ENCODE measurements at regions of chr2 and their contacts with region 1.

Region 1: DNA sequence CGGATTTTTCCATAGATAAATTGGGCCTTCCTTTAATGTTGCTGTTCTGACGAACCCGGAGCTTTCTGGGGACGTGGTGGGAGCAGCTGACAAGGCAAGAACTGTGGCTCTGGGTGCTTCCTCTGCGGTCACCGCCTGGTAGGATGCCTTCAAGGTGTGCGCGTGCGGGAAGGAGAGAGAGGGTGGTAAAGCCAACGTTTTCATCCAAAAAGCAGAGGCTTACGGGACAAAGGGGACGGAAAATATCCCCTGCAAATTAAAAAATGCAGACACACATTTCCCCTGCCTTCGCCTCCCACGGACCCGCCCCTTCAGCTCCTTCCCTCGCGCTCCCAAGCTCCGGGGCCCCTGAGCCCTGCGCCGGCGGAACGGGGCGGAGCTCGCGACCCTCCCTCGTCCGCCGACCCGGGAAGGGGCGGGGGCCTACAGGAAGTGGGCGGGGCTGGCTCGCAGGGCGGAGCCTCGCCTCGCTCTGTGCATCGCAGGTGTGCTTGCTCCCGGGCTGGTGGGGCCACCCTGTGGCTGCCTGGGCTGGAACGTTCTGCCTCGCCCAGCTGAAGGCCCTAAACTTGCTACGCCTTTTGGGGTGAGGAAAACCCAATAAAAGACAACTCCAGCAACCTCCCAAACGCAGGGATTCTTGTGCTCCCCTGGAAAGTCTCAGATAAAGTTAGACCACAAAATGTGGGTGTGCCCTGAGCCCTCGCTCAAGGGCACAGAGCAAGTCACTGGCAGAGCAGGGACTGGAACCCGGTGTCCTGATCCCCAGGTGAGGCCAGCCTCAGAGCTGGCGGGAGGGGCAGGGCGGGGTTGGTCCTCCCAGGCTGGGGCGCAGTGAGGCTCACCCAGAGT is 25.4 kb upstream of the SLC66A3 start:
- DNase-seq: peak; percentile 96
- H3K4me3 ChIP-seq: peak overlapping the region in 1 of 2 experiments; percentile 29; a peak in 2 of 4 replicates
- H3K27ac ChIP-seq: peak overlapping the region in 1 of 2 experiments; percentile 3; a peak in 1 of 4 replicates
- H3K4me1 ChIP-seq: peaks cover 0 to 20% of the 10 kb centered on the region in 2 experiments; a peak in 1 of 4 replicates
- H3K27me3 ChIP-seq: no peaks in the 10 kb centered on the region
- CTCF ChIP-seq: no peak
- EP300 ChIP-seq: no peak
- RAD21 ChIP-seq: peak; percentile 68

Region 2: DNA sequence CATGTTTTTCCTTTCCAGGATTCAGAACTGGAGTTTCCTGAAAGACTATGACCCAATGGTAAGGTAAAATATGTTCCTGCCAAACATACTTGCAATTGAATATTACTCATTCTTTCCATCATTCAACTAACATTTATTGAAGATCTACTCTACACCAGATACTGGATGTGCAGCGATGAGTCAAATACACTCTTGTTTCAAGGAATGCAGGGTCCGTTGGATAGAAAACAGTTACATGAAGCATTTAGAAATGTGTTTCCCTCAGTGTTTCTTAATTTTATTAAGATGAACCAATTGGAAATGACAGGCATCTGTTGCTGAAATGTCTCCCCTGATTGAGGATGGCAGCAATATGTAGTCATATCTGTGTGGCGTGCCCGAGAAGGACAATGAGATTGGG is 10.7 kb after region 1 on chr2:
- CTCF ChIA-PET with region 1: interaction called, 81 read pairs
- POLR2A ChIA-PET with region 1: no interaction called
- DNase-seq: no peak
- H3K4me3 ChIP-seq: no peak overlapping the region
- H3K27ac ChIP-seq: peak overlapping the region in 1 of 2 experiments; percentile 66; a peak in 2 of 4 replicates
- H3K4me1 ChIP-seq: no peaks in the 10 kb centered on the region
- H3K27me3 ChIP-seq: no peaks in the 10 kb centered on the region
- CTCF ChIP-seq: no peak
- EP300 ChIP-seq: peak in 1 of 2 experiments; percentile 85; a peak in 3 of 4 replicates
- RAD21 ChIP-seq: no peak

Region 3: GRCh38 chr2:11203480-11203879 is 73.7 kb after region 1 on chr2:
- CTCF ChIA-PET with region 1: interaction called, 21 read pairs
- POLR2A ChIA-PET with region 1: no interaction called
- DNase-seq: no peak
- H3K4me3 ChIP-seq: no peak overlapping the region
- H3K27ac ChIP-seq: peak overlapping the region in 1 of 2 experiments; percentile 71; a peak in 2 of 4 replicates
- H3K4me1 ChIP-seq: peaks cover 0 to 20% of the 10 kb centered on the region in 2 experiments; a peak in 1 of 4 replicates
- H3K27me3 ChIP-seq: no peaks in the 10 kb centered on the region
- CTCF ChIP-seq: no peak
- EP300 ChIP-seq: peak in 1 of 2 experiments; percentile 58; a peak in 1 of 4 replicates
- RAD21 ChIP-seq: no peak

Region 4: DNA sequence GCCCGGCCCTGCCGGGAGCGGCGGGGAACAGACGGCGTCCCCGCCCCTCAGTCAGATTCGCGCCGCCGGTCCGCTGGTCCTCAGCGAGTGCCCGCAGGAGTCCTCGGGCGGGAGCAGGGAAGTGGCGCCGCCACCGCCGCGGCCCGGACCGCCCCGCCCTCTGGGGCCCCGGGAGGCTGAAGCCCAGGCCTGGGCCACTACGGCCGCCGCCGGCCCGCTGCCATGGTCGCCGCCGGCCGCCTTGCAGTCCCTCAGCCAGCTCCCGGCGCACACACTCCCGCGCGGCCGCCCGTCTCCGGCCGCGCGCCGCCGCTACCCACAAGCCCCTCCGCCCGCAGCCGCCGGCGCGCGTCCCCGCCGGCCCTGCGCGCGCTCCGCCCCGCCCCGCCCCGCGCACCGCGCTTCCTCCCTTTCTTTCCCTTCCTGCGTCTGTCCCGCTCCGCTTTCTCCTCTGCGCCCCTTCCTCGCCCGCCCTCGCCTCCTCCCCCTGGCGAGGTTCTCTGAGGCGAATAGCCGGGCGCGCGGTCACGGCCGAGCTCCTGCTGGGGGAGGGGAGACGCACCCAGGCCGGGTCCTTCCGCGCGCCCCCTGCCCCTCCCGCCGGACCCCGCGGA is 214.6 kb after region 1 on chr2 and contains the start of gene ROCK2:
- CTCF ChIA-PET with region 1: interaction called, 30 read pairs
- POLR2A ChIA-PET with region 1: interaction called, 16 read pairs
- DNase-seq: peak; percentile 98
- H3K4me3 ChIP-seq: peak within 1 kb of the TSS; percentile 88 to 99
- H3K27ac ChIP-seq: peak within 1 kb of the TSS; percentile 91 to 98
- H3K4me1 ChIP-seq: peaks cover 18 to 25% of the 10 kb centered on the region in 2 experiments
- H3K27me3 ChIP-seq: no peaks in the 10 kb centered on the region
- CTCF ChIP-seq: no peak
- EP300 ChIP-seq: 0 out of 4 replicates have a peak, but pooled peaks of 1 of the 2 experiments have one; percentile 12
- RAD21 ChIP-seq: no peak
- polyA plus RNA-seq, gene ROCK2: 4.2 and 4.9 TPM in 2 replicates

Region 5: DNA sequence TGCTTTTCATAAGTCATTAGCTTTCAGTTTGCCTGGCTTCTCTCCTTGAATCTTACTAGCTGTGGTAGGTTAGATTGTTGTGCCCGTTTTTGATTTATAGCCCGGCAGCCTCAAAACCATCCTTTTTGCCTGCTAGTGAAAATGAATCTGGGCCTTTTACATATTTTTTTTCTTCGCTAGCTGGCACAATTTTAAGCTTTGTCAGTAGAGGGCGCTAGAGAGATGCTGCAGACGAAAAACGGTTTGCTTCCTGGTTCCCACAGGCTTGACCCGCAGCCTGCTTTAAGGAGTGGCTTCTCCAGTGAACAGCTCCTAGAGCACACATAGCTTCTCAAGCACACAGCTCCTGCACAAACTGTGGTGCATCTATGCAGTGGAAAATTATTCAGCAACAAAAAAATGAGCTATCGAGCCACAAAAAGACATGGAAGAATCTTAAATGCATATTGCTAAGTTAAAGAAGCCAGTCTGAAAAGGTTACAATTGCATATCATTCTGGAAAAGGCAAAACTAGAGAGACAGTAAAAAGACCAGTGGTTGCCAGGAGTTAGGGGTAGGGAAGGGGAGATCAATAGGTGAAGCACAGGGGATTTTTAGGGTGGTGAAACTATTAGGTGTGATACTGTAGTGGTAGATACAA is 288.2 kb after region 1 on chr2:
- CTCF ChIA-PET with region 1: interaction called, 294 read pairs
- POLR2A ChIA-PET with region 1: no interaction called
- DNase-seq: no peak
- H3K4me3 ChIP-seq: no peak overlapping the region
- H3K27ac ChIP-seq: no peak overlapping the region
- H3K4me1 ChIP-seq: peaks cover 0 to 2% of the 10 kb centered on the region in 2 experiments; a peak in 1 of 4 replicates
- H3K27me3 ChIP-seq: no peaks in the 10 kb centered on the region
- CTCF ChIP-seq: peak; percentile 44
- EP300 ChIP-seq: no peak
- RAD21 ChIP-seq: peak; percentile 18; the same call in 1 of the 2 replicates

Region 6: DNA sequence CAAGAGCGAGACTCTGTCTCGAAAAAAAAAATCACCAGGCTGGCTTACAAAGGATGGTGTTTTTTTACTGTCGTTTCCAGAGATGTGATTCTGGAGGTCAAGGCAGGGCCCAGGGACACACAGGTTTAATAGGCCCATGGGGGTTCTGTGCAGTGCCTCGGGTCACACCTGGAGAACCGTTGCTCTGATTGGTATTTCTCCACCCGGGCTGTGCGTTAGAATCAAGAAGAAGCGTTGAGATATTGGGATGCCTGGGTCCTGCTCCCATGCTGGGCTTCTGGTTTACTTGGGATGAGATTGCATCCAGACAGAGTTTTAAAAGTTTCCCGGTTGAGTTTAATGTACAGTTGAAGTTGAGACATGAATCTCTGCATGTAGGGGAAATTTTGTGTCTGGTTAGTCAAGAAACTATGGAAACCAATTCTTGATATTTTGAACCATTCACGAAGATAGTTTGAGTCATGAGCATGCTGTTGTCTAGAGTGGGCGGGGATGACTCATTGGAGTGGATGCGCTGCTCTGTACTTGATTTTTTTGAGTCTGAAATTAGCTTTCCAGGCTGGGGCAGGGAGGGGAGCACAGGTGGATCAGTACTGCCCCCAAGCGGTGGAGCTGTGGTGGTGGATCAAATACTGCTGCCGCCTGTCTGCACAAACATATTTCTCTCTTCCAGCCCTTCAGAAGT is 454.2 kb after region 1 on chr2:
- CTCF ChIA-PET with region 1: interaction called, 39 read pairs
- POLR2A ChIA-PET with region 1: no interaction called
- DNase-seq: peak; percentile 95
- H3K4me3 ChIP-seq: no peak overlapping the region; a peak in 1 of 4 replicates
- H3K27ac ChIP-seq: peak overlapping the region in 1 of 2 experiments; percentile 80; a peak in 2 of 4 replicates
- H3K4me1 ChIP-seq: no peaks in the 10 kb centered on the region; a peak in 2 of 4 replicates
- H3K27me3 ChIP-seq: no peaks in the 10 kb centered on the region
- CTCF ChIP-seq: peak; percentile 100
- EP300 ChIP-seq: peak in 1 of 2 experiments; percentile 12; a peak in 1 of 4 replicates
- RAD21 ChIP-seq: peak; percentile 100

Measured in SK-N-SH (cell line).